Naive thymus-derived CD4-positive, alpha-beta T cell (primary cell): ENCODE measurements at regions of chr5 and their contacts with region 1.

Region 1: DNA sequence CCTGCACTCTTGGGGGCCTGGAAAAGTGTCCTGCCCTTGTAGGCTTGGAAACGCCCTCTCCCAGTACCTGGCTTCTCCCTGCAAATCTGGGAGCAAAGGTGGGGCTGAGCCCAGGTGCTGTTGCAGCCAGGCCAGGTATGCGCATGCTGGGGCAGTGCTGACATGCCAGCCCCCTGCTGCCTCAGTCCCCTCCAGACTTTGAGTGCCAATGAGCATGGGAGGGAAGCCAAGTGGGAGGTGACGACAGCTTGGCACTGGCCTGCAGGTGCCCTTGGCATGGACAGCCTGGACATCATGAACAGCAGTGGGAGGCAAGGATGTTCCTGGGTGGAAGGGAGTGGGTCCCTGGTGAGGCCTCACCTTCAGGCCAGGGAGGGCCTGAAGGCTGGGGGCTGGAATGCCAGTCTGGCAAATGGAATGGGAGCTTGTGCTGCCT is 1494.4 kb upstream of the NUDT12 start:
- DNase-seq: no peak
- ATAC-seq: no peak
- H3K4me3 ChIP-seq: no peak overlapping the region
- H3K4me3 Mint-ChIP-seq: no peak overlapping the region
- H3K27ac ChIP-seq: no peak overlapping the region
- H3K27ac Mint-ChIP-seq: no peak overlapping the region
- H3K4me1 ChIP-seq: no peaks in the 10 kb centered on the region
- H3K4me1 Mint-ChIP-seq: no peaks in the 10 kb centered on the region
- H3K27me3 ChIP-seq: no peaks in the 10 kb centered on the region
- H3K27me3 Mint-ChIP-seq: no peaks in the 10 kb centered on the region

Region 2: GRCh38 chr5:104986327-104986726 is 70.7 kb before region 1 on chr5:
- CTCF ChIA-PET with region 1: no interaction called
- POLR2A ChIA-PET with region 1: no interaction called
- intact Hi-C with region 1: loop called in 1 of 2 experiments (anchors 2 kb)
- DNase-seq: no peak
- ATAC-seq: no peak
- H3K4me3 ChIP-seq: no peak overlapping the region
- H3K4me3 Mint-ChIP-seq: no peak overlapping the region
- H3K27ac ChIP-seq: no peak overlapping the region
- H3K27ac Mint-ChIP-seq: no peak overlapping the region
- H3K4me1 ChIP-seq: no peaks in the 10 kb centered on the region
- H3K4me1 Mint-ChIP-seq: no peaks in the 10 kb centered on the region
- H3K27me3 ChIP-seq: no peaks in the 10 kb centered on the region
- H3K27me3 Mint-ChIP-seq: no peaks in the 10 kb centered on the region